Right lobe of liver (tissue), 6 donors: ENCODE measurements at regions of chr14 and their contacts with region 1.

Region 1: GRCh38 chr14:104072586-104072985 is 12.9 kb upstream of the ASPG start:
- DNase-seq: no peak
- ATAC-seq: no peak
- H3K4me3 ChIP-seq: no peak overlapping the region
- H3K27ac ChIP-seq: no peak overlapping the region
- H3K4me1 ChIP-seq: no peaks in the 10 kb centered on the region
- H3K27me3 ChIP-seq: no peaks in the 10 kb centered on the region
- CTCF ChIP-seq: no peak
- POLR2A ChIP-seq: no peak

Region 2: DNA sequence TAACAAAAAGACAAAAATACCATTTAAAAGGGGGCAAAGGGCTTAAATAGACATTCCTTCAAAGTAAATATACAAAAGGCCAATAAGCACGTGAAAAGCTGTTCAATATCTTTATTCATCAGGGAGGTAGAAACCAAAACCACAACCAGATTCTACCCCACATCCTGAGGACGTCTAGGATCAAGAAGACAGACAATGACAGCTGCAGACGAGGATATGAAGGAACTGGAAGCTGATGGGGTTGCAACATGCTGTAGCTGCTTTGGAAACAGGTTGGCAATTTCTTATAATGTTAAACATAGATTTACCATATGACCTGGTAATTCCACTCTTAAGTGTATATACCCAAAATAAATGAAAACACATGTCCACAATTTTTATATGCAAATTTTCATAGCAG is 421.9 kb after region 1 on chr14:
- intact Hi-C with region 1: no loop called
- DNase-seq: no peak
- ATAC-seq: no peak
- H3K4me3 ChIP-seq: no peak overlapping the region
- H3K27ac ChIP-seq: no peak overlapping the region
- H3K4me1 ChIP-seq: no peaks in the 10 kb centered on the region
- H3K27me3 ChIP-seq: no peaks in the 10 kb centered on the region
- CTCF ChIP-seq: no peak
- POLR2A ChIP-seq: no peak

Region 3: DNA sequence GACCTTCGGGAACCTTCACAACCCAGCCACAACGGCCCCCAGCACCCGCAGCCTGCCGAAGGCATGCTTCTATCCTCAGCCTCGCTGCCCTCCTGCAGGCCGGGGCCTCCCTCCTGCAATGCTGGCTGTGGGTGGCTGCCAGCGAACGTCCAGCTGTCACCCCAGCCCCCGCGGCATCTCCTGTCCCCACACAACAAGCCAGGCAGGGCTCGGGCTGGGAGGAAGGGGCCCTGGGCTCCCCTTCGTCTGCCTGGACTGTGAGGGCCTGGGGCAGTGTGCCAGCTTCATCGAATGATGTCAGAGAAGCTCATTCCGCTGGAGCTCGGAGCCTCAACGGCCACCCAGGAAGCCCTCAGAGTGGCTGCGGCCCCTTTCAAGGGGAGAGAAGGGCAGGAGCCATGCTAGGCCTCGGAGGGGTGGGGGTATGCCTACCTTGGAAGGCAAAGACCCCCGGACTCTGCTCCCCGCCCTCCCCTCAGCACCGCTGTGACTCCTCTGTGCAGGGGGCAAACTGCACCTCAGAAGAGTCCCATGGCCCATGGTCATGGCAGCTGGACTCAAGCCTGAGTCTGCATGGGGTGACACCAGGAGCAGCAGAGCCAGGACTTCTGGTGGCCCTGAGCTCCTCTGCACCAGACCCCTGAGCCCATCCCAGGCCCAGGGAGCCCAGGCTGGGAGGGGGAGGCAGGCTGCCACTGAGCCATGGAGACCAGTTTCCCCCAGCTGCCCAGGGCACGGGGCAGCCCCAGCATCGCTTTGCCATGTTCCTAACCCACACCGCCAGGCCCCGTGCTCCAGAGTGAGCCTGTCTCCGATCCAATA is 482.2 kb after region 1 on chr14:
- intact Hi-C with region 1: loop called (anchors 5 to 10 kb)
- DNase-seq: peak; percentile 13 to 48 (median 44)
- ATAC-seq: no peak
- H3K4me3 ChIP-seq: no peak overlapping the region
- H3K27ac ChIP-seq: no peak overlapping the region
- H3K4me1 ChIP-seq: no peaks in the 10 kb centered on the region
- H3K27me3 ChIP-seq: no peaks in the 10 kb centered on the region
- CTCF ChIP-seq: no peak
- POLR2A ChIP-seq: no peak